ENCODE measurements at regions of chr1 and their contacts with region 1.

Region 1: GRCh38 chr1:117059678-117060440 is at the start of gene TTF2:
- DNase-seq: peak; percentile 82 to 99 (median 98)
- ATAC-seq: peak; percentile 96
- H3K4me3 ChIP-seq: peak within 1 kb of the TSS; percentile 81
- H3K4me3 Mint-ChIP-seq: no peak within 1 kb of the TSS
- H3K27ac ChIP-seq: peak within 1 kb of the TSS; percentile 82
- H3K27ac Mint-ChIP-seq: peak within 1 kb of the TSS in 4 of 9 donors; percentile 45 to 83 (median 62)
- H3K4me1 ChIP-seq: peaks cover 6 to 9% of the 10 kb centered on the region in 2 donors
- H3K4me1 Mint-ChIP-seq: peaks cover 19 to 60% (median 41%) of the 10 kb centered on the region in 7 donors
- H3K27me3 ChIP-seq: no peaks in the 10 kb centered on the region
- H3K27me3 Mint-ChIP-seq: no peaks in the 10 kb centered on the region
- total RNA-seq, gene TTF2: 27.6 to 74.4 (median 35.2) TPM

Region 2: DNA sequence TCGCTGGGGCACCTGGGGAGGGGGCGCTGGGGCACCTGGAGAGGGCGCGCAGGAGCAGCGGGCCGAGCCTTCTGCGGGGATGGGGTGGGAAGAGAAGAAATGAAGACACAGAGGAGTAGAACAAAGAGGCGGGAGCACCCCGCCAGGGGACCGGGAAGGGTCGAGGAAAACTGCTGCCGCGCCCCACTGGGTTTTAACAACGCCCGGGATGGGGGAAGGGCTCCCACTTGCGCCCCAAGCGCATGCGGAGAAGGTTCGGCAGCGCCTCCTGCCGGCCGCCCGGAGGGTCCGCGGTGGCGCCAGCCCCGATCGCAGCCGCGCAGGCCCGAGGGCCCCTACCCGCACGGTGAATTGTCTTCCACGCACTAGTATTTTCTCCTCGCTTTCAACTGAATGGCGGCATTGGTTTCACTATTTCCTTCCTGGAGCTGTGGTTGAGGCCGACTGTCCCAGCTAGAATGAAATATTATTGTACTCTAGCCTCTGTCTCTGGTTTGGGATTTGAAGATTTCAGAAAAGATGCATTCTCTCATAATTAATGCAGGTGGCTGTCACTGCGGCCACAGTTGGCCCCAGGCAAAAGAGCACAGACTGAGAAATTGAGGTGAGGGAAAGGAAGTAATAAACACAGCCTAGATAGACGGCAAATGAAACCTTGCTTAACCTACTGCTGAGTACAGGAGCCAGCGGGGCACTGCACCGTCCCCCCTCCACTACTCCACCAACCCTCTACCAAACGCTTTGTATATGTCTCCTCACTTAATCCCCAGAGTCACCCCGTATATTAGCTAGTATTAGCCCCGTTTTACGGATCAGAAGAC is 891.4 kb before region 1 on chr1:
- CTCF ChIA-PET with region 1: no interaction called
- POLR2A ChIA-PET with region 1: no interaction called
- intact Hi-C with region 1: loop called in 1 of 2 experiments (anchors 10 kb)
- DNase-seq: peak; percentile 74 to 88 (median 83)
- ATAC-seq: peak; percentile 97
- H3K4me3 ChIP-seq: peak overlapping the region; percentile 75
- H3K4me3 Mint-ChIP-seq: peak overlapping the region; percentile 70 to 90 (median 88)
- H3K27ac ChIP-seq: peak overlapping the region; percentile 60
- H3K27ac Mint-ChIP-seq: peak overlapping the region; percentile 81 to 96 (median 92)
- H3K4me1 ChIP-seq: peaks cover 9% of the 10 kb centered on the region in 2 donors
- H3K4me1 Mint-ChIP-seq: peaks cover 14 to 23% (median 19%) of the 10 kb centered on the region in 7 donors
- H3K27me3 ChIP-seq: no peaks in the 10 kb centered on the region
- H3K27me3 Mint-ChIP-seq: peaks cover 0 to 14% (median 0%) of the 10 kb centered on the region in 5 donors

Region 3: DNA sequence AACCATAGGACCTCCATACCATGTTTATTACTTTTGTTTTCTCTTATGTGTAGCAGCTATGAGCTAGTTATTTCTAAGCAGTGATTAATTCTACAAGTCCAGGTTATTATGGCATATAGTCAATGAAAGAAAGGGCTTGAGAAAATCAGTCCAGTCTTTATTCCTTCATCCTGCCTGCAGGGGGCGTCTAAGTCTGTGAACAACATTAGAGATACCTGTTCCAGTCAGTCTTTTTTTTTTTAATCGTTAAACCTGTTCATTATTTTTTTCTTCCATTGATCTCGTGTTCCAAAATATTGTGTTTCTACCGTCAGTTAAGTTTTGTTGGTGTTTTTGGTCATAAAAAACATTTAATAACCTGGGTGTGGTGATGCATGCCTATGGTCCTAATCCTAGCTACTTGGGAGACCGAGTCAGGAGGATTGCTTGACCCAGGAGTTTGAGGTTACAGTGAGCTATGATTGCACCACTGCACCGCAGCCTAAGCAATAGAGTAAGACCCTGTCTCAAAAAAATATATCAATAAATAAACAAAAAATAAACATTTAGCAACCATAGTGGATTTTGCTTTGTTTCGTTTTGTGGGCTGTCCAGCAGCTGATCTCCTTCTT is 335.0 kb before region 1 on chr1:
- CTCF ChIA-PET with region 1: interaction called, 9 read pairs
- POLR2A ChIA-PET with region 1: interaction called, 4 read pairs
- intact Hi-C with region 1: loop called (anchors 1 kb)
- DNase-seq: peak; percentile 45 to 74 (median 70)
- ATAC-seq: peak; percentile 77
- H3K4me3 ChIP-seq: no peak overlapping the region
- H3K4me3 Mint-ChIP-seq: no peak overlapping the region
- H3K27ac ChIP-seq: no peak overlapping the region
- H3K27ac Mint-ChIP-seq: no peak overlapping the region
- H3K4me1 ChIP-seq: no peaks in the 10 kb centered on the region
- H3K4me1 Mint-ChIP-seq: peaks cover 4 to 27% (median 13%) of the 10 kb centered on the region in 7 donors
- H3K27me3 ChIP-seq: no peaks in the 10 kb centered on the region
- H3K27me3 Mint-ChIP-seq: no peaks in the 10 kb centered on the region

Region 4: GRCh38 chr1:116817582-116818064 is 242.2 kb before region 1 on chr1:
- CTCF ChIA-PET with region 1: interaction called, 4 read pairs
- POLR2A ChIA-PET with region 1: interaction called, 12 read pairs
- intact Hi-C with region 1: loop called (anchors 1 to 2 kb)
- DNase-seq: peak; percentile 43 to 67 (median 63)
- ATAC-seq: peak; percentile 85
- H3K4me3 ChIP-seq: no peak overlapping the region
- H3K4me3 Mint-ChIP-seq: peak overlapping the region; percentile 4 to 75 (median 58)
- H3K27ac ChIP-seq: no peak overlapping the region
- H3K27ac Mint-ChIP-seq: peak overlapping the region in 8 of 9 donors; percentile 22 to 85 (median 82)
- H3K4me1 ChIP-seq: peaks cover 23 to 33% of the 10 kb centered on the region in 2 donors
- H3K4me1 Mint-ChIP-seq: peaks cover 20 to 58% (median 34%) of the 10 kb centered on the region in 7 donors
- H3K27me3 ChIP-seq: no peaks in the 10 kb centered on the region
- H3K27me3 Mint-ChIP-seq: no peaks in the 10 kb centered on the region

Region 5: GRCh38 chr1:116990612-116991151 is 69.2 kb before region 1 on chr1:
- CTCF ChIA-PET with region 1: no interaction called
- POLR2A ChIA-PET with region 1: interaction called, 75 read pairs
- intact Hi-C with region 1: loop called (anchors 1 kb)
- DNase-seq: no peak
- ATAC-seq: peak; percentile 15
- H3K4me3 ChIP-seq: no peak overlapping the region
- H3K4me3 Mint-ChIP-seq: no peak overlapping the region
- H3K27ac ChIP-seq: no peak overlapping the region
- H3K27ac Mint-ChIP-seq: no peak overlapping the region
- H3K4me1 ChIP-seq: peaks cover 6 to 48% of the 10 kb centered on the region in 2 donors
- H3K4me1 Mint-ChIP-seq: peaks cover 22 to 70% (median 67%) of the 10 kb centered on the region in 7 donors
- H3K27me3 ChIP-seq: no peaks in the 10 kb centered on the region
- H3K27me3 Mint-ChIP-seq: no peaks in the 10 kb centered on the region

Region 6: GRCh38 chr1:117367047-117368018 is 307.5 kb after region 1 on chr1 and contains the start of gene MAN1A2:
- CTCF ChIA-PET with region 1: no interaction called
- POLR2A ChIA-PET with region 1: interaction called, 7 read pairs
- intact Hi-C with region 1: loop called (anchors 1 to 5 kb)
- DNase-seq: peak in 7 of 9 donors; percentile 59 to 79 (median 75)
- ATAC-seq: peak; percentile 78
- H3K4me3 ChIP-seq: peak within 1 kb of the TSS; percentile 83
- H3K4me3 Mint-ChIP-seq: peak within 1 kb of the TSS; percentile 92 to 98 (median 95)
- H3K27ac ChIP-seq: peak within 1 kb of the TSS; percentile 91
- H3K27ac Mint-ChIP-seq: peak within 1 kb of the TSS; percentile 92 to 99 (median 97)
- H3K4me1 ChIP-seq: peaks cover 23 to 44% of the 10 kb centered on the region in 2 donors
- H3K4me1 Mint-ChIP-seq: peaks cover 46 to 82% (median 73%) of the 10 kb centered on the region in 7 donors
- H3K27me3 ChIP-seq: no peaks in the 10 kb centered on the region
- H3K27me3 Mint-ChIP-seq: no peaks in the 10 kb centered on the region
- total RNA-seq, gene MAN1A2: 40.4 to 63.4 (median 47.1) TPM

Measured in naive thymus-derived CD4-positive, alpha-beta T cell (primary cell).